ENCODE measurements at regions of chr2 and their contacts with region 1.

Region 1: DNA sequence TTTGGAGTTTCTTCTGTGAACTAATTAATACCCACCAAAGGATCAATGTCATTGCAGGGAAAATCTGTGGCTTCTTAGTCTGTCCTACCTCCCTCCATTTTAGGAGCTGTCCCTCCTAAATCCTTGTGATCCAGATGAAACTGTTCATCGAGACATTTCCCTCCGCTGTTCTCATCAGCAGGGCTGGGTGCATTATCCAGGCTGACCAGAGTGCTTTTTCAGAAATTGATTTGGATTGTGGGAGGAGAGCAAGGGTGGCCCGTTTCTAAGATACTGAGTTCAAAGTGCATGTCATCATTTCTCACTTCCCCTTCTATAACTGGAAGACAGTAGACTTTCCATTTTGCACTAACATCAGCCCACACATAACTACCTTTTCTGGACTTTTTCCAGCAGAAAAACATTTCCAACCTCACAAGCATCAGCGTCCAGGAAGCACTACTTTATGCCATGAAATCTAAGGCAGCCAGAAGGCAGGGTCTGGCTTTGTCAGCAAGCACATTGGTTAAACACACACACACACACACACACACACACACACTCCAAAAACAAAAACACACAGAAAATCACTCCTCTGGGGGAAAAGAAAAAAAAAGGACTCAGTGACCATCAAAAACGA is 94.1 kb downstream of the ANKRD44 start:
- DNase-seq: no peak
- ATAC-seq: peak; percentile 54
- H3K4me3 Mint-ChIP-seq: peak overlapping the region; percentile 70
- H3K27ac Mint-ChIP-seq: peak overlapping the region; percentile 99
- H3K4me1 Mint-ChIP-seq: peaks cover 88% of the 10 kb centered on the region
- H3K27me3 Mint-ChIP-seq: no peaks in the 10 kb centered on the region

Region 2: GRCh38 chr2:196249860-196250259 is 966.6 kb before region 1 on chr2:
- CTCF ChIA-PET with region 1: no interaction called
- POLR2A ChIA-PET with region 1: no interaction called
- intact Hi-C with region 1: loop called in 1 of 2 experiments (anchors 10 kb)
- DNase-seq: no peak
- ATAC-seq: peak; percentile 24
- H3K4me3 Mint-ChIP-seq: no peak overlapping the region
- H3K27ac Mint-ChIP-seq: peak overlapping the region; percentile 72
- H3K4me1 Mint-ChIP-seq: peaks cover 88% of the 10 kb centered on the region
- H3K27me3 Mint-ChIP-seq: no peaks in the 10 kb centered on the region

Region 3: GRCh38 chr2:197229509-197230443 is 13.3 kb after region 1 on chr2:
- CTCF ChIA-PET with region 1: interaction called, 5 read pairs
- POLR2A ChIA-PET with region 1: no interaction called
- intact Hi-C with region 1: loop called in 1 of 2 experiments (anchors 1 kb)
- DNase-seq: no peak
- ATAC-seq: no peak
- H3K4me3 Mint-ChIP-seq: no peak overlapping the region
- H3K27ac Mint-ChIP-seq: peak overlapping the region; percentile 65
- H3K4me1 Mint-ChIP-seq: peaks cover 92% of the 10 kb centered on the region
- H3K27me3 Mint-ChIP-seq: no peaks in the 10 kb centered on the region

Region 4: GRCh38 chr2:197576631-197577030 is 360.2 kb after region 1 on chr2:
- CTCF ChIA-PET with region 1: no interaction called
- POLR2A ChIA-PET with region 1: no interaction called
- intact Hi-C with region 1: no loop called
- DNase-seq: no peak
- ATAC-seq: no peak
- H3K4me3 Mint-ChIP-seq: no peak overlapping the region
- H3K27ac Mint-ChIP-seq: no peak overlapping the region
- H3K4me1 Mint-ChIP-seq: no peaks in the 10 kb centered on the region
- H3K27me3 Mint-ChIP-seq: no peaks in the 10 kb centered on the region

Measured in activated CD4-positive, alpha-beta T cell treated with anti-CD3 and anti-CD28 coated beads for 36 hours (primary cell).